HEK293T (cell line): ENCODE measurements at regions of chr1 and their contacts with region 1.

Region 1: GRCh38 chr1:39901698-39902459 is at the start of gene MYCL:
- DNase-seq: peak; percentile 86

Region 2: DNA sequence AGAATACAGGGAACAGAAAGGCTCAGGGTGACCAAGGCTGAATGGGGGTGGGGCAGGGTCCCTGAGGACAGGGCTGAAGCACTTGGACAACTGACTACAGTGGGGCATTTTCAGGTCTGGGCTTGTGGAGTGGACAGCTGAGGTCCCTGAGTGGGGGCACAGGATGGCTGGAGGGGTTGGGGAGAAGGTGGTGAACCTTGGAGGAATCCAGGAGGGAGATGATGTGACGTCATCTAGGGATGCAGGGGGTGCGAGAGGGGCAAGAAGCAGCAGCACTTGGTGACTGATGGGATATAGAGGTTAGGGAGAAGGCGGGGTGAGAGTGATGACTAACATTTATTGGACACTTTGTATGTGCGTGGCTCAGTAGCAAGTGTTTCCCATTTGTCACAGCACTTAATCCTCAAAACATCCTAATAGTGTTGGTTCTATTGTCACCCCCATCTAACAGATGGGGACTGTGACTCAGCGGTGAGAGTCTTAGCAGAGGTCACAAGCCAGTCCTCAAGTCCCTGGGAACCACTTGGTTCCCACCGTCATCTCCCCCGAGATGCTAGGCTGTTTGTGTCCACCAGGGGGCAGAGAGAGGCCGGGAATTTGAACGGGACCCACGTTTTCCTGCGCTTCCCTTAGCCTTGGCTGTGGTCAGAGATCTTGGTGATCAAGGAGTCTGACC is 85.3 kb before region 1 on chr1:
- CTCF ChIA-PET with region 1: interaction called, 12 read pairs
- POLR2A ChIA-PET with region 1: no interaction called
- DNase-seq: peak; percentile 80

Region 3: DNA sequence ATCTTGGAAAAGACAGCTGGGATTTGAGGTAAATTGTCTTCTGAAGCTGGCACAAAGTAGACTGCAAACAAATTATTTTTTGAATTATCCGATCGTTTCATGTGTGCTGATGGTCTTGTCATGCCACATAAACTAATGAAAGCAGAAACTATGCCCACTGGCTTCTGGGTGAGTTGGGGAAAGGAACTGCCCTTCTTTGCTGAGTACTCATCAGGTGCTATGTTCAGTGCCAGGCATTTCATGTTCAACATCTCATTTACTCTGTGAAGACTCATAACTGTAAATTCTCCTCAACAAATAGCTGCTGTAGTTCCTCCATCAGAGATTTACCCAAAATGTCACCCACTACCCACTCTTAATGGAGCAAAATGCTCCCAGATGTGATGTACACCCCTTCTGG is 19.7 kb before region 1 on chr1:
- CTCF ChIA-PET with region 1: interaction called, 10 read pairs
- POLR2A ChIA-PET with region 1: interaction called, 9 read pairs
- DNase-seq: no peak